ENCODE measurements at regions of chr1 and their contacts with region 1.

Region 1: GRCh38 chr1:232950197-232951176 is at the start of gene NTPCR:
- DNase-seq: peak; percentile 98
- ATAC-seq: peak; percentile 77
- H3K4me3 ChIP-seq: peak within 1 kb of the TSS; percentile 81
- H3K27ac ChIP-seq: peak within 1 kb of the TSS; percentile 57
- H3K4me1 ChIP-seq: peaks cover 24% of the 10 kb centered on the region
- H3K27me3 ChIP-seq: no peaks in the 10 kb centered on the region
- CTCF ChIP-seq: 0 out of 2 replicates have a peak, but pooled peaks have one; percentile 6
- total RNA-seq, gene NTPCR: 17.5 and 43.1 TPM in 2 replicates

Region 2: GRCh38 chr1:232207073-232207866 is 743.2 kb before region 1 on chr1:
- CTCF ChIA-PET with region 1: no interaction called
- POLR2A ChIA-PET with region 1: interaction called, 15 read pairs
- intact Hi-C with region 1: no loop called
- DNase-seq: peak; percentile 28
- ATAC-seq: peak; percentile 53
- H3K4me3 ChIP-seq: no peak overlapping the region
- H3K27ac ChIP-seq: no peak overlapping the region
- H3K4me1 ChIP-seq: peaks cover 14% of the 10 kb centered on the region
- H3K27me3 ChIP-seq: no peaks in the 10 kb centered on the region
- CTCF ChIP-seq: no peak

Region 3: DNA sequence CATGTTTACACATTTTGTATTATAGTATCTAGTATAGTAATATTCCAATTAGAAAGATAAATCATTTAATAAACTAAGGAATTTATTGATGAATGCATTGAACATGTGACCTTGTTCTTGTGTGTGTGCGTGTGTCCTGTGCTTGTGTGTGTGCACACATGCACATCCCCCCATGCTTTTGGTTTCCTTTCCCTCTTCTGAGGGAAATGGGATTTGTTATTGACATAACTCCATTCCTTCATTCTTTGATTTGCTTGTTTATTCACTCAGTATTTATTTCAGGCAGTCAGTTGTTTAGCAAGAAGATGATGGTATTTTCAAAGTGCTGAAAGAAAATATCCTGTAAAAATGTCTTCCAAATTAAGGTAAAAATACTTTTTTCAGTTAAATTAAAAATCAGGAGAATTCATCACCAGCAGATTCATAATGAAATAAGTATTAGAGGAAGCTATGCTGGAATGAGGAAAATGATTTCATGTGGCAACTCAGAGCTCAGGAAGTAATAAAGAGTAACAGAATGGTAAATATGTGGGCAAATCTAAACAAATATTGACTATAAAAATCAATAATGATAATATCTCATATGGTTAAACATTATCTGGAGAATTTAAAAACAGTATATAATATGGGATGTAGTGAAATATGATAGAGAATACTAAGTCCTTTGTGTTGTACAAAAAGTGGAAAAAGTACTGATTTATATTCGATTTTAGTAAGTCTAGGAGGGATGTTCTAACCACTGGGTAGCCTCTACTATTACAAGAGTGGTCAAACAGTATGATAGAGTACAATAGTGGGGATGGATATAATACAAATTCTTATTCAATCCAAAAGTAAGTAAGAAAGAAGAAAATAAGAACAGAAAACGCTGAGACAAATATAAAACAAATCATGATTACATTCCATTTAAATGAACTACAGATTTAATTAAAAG is 285.4 kb before region 1 on chr1:
- CTCF ChIA-PET with region 1: no interaction called
- POLR2A ChIA-PET with region 1: no interaction called
- intact Hi-C with region 1: loop called (anchors 1 kb)
- DNase-seq: peak; percentile 68
- ATAC-seq: peak; percentile 81
- H3K4me3 ChIP-seq: 0 out of 2 replicates have a peak overlapping the region, but pooled peaks have one; percentile 3
- H3K27ac ChIP-seq: peak overlapping the region; percentile 72
- H3K4me1 ChIP-seq: peaks cover 21% of the 10 kb centered on the region
- H3K27me3 ChIP-seq: no peaks in the 10 kb centered on the region
- CTCF ChIP-seq: no peak

Region 4: DNA sequence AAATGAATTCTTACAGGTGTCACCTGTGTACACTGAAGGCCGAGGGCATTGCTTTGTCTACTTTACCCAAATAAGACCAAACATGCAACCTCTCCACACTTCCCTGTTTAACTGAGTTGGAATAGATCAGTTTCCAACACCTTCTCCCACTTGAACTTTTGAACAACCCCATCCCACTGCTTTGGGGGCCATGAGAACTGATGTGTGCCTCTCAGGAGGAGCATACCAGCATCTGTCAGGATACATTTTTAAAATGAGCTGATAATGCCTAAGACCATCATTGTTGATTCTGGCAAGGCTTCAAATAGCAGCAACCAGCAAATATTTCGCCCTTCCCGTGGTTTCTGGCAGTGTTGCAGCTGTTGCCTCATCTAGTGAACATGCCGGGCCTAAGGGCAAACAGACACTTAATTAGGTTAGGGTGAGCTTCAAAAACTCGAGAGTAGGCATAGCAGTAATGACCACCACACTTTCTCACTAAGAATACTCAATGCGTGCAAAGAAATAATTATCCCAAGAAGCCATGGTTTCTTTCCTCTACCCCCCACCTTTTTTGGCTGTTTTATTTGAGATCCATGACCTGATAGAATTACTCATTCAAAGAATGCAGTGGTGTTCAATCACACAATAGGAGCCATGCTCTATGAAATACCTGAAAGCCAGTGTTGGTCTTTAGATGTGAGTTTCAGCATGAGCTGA is 81.5 kb before region 1 on chr1:
- CTCF ChIA-PET with region 1: no interaction called
- POLR2A ChIA-PET with region 1: no interaction called
- intact Hi-C with region 1: loop called (anchors 1 kb)
- DNase-seq: peak; percentile 97
- ATAC-seq: peak; percentile 81
- H3K4me3 ChIP-seq: no peak overlapping the region
- H3K27ac ChIP-seq: peak overlapping the region; percentile 80
- H3K4me1 ChIP-seq: peaks cover 31% of the 10 kb centered on the region
- H3K27me3 ChIP-seq: no peaks in the 10 kb centered on the region
- CTCF ChIP-seq: no peak

Region 5: DNA sequence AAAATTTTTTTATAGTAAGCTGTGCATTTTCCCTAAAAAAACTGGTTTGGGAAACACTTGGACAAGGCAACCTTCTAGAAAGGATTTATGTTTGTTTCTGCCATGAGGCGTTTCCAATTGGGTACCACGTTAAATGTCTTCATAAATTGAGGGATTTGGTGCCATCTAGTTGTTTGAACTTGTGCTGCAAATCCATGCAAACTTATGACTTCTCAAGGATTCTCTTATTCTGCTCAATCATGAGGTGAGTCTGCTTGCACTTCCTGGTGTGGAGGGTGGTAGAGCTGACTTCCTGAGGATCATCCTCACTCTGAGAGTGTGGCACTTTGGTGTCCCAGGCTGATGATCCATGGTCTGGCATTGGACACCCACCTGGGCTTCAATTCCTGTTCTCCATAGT is 221.7 kb after region 1 on chr1:
- CTCF ChIA-PET with region 1: no interaction called
- POLR2A ChIA-PET with region 1: no interaction called
- intact Hi-C with region 1: loop called (anchors 5 kb)
- DNase-seq: peak; percentile 89
- ATAC-seq: peak; percentile 75
- H3K4me3 ChIP-seq: no peak overlapping the region
- H3K27ac ChIP-seq: no peak overlapping the region
- H3K4me1 ChIP-seq: peaks cover 12% of the 10 kb centered on the region; the same call in 1 of the 2 replicates
- H3K27me3 ChIP-seq: no peaks in the 10 kb centered on the region
- CTCF ChIP-seq: peak; percentile 89